Uterus (tissue), 4 donors: ENCODE measurements at regions of chr19 and their contacts with region 1.

Region 1: DNA sequence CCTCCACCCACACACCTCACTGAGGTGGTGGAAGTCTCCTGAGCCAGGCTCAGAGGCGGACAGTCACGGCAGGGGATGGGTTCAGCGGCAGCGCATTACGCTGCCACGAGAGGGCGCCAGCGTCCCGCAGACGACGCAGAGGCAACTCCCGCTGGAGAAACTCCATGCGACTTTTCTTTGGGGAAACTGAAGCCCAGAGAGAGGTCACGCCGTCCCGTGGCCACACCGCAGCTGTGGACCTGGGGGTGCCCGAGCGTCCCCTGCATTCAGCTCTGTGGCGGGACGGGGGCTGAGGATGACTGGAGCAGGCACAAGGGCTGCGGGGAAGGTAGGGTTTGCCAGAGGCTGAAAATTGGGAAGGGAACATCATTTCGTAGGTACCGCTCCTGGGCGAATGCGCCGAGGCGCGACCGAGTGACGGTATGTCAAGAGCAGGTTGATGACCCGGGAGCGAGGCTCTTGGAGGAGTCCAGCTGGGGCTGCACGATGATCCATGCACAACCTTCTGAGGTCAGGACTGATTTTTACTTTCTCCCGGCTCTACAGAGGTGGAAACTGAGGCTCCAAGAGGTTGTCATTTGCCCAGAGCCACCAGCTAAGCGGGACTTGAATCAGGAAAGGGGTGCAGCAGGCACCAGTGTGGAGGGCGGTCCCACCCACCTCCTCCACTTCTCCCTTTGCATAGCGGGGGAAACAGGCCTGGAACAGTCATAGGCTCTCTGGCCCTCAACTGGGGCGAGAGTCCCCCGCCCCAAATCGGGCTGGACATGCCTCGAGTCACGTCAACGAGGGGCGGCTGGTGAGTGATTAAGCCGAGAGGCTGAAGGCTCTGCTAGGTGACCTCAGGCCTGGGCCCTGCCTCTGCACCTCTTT is 690 bp upstream of the ARRDC2 start:
- DNase-seq: peak; percentile 76 to 81
- H3K4me3 ChIP-seq: peak overlapping the region; percentile 43 to 51
- H3K27ac ChIP-seq: peak overlapping the region; percentile 80 to 81
- H3K4me1 ChIP-seq: peaks cover 0 to 5% of the 10 kb centered on the region in 2 donors
- H3K27me3 ChIP-seq: no peaks in the 10 kb centered on the region
- CTCF ChIP-seq: peak; percentile 95 to 99 (median 96)
- POLR2A ChIP-seq: peak; percentile 38 to 75

Region 2: GRCh38 chr19:18044825-18045304 is 37.6 kb after region 1 on chr19:
- intact Hi-C with region 1: no loop called
- DNase-seq: peak; percentile 38 to 49
- H3K4me3 ChIP-seq: peak overlapping the region; percentile 14 to 27
- H3K27ac ChIP-seq: peak overlapping the region; percentile 33 to 52
- H3K4me1 ChIP-seq: no peaks in the 10 kb centered on the region
- H3K27me3 ChIP-seq: no peaks in the 10 kb centered on the region
- CTCF ChIP-seq: no peak
- POLR2A ChIP-seq: no peak

Region 3: DNA sequence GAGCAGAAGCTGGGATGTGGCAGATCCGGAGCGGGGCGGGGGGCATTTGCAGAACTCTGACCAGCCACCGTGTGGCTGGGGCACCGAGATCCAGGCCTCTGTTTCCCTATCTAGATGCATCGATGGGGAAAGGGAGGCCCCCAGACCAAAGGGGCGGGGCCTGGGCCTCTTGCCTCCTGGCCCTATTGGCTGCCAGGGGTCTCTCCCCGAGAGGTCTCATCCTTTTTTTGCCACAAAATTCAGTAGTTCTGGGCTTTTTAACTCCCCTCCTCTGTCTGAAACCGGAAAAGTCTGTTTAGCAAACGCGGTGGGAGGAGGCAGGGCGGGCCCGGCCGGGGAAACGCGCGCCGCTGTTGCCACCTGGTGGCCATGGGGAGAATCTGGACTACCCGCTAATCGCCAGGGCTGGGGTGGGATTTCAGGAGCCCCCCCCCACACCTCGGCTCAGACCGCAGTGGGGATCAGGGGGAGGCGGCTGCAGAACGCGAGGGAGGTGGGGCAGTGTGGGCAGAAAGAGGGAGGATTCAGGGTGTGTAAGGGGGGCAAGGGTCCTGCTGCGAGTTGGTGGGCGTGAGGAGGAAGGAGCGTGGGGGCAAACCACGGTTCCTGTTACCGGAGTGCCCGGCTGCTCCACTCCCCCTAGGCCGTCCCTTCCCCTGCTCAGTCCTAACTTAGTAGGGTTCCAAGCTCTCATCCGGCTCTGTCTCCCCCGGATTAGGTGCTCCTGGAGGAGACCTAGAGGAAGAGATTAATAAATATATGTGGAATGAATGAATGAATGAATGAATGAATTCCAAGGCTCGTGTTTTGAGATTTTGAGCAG is 51.1 kb after region 1 on chr19:
- intact Hi-C with region 1: loop called (anchors 5 kb)
- DNase-seq: peak; percentile 53 to 74
- H3K4me3 ChIP-seq: no peak overlapping the region
- H3K27ac ChIP-seq: peak overlapping the region; percentile 68 to 83
- H3K4me1 ChIP-seq: no peaks in the 10 kb centered on the region
- H3K27me3 ChIP-seq: no peaks in the 10 kb centered on the region
- CTCF ChIP-seq: peak; percentile 93 to 96 (median 96)
- POLR2A ChIP-seq: no peak